ENCODE measurements at regions of chr11 and their contacts with region 1.

Region 1: DNA sequence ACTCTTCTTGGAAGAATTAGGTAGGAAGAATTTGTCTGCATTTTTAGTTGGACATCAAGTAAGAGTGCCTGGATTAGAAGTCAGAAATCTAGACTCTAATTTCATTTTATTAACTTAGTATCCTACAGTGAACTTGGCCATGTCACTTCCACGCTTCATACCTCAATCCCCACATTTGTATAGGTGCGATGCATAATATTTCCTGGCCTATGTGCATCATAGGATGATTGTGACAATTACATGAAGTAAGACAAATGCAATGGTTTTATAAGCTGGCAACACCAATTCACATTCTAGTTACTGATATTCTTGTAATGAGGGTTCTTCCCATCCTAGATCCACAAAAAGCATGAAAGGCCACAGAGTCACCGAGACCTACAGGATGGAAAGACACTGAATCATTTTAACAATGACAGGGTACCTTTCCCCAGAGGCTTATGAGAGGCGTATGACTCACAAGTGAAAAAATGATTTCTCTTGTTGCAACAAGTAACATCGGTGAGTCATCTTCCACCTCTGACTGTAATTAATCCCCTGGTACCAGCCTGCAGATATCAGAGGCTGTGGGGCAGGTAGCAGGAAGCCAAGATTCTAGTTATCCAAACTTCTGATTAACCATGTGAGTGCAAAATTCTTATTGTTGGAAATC is 56.0 kb upstream of the OR5AK2 start:
- DNase-seq: peak; percentile 54 to 97
- H3K4me3 ChIP-seq: no peak overlapping the region
- H3K27ac ChIP-seq: peak overlapping the region; percentile 84
- H3K4me1 ChIP-seq: peaks cover 20% of the 10 kb centered on the region
- H3K27me3 ChIP-seq: no peaks in the 10 kb centered on the region
- CTCF ChIP-seq: no peak

Region 2: GRCh38 chr11:56906683-56907148 is 26.0 kb before region 1 on chr11:
- CTCF ChIA-PET with region 1: no interaction called
- POLR2A ChIA-PET with region 1: no interaction called
- intact Hi-C with region 1: loop called (anchors 2 kb)
- DNase-seq: peak; percentile 54 to 87
- H3K4me3 ChIP-seq: peak overlapping the region; percentile 15; the same call in 1 of the 2 replicates
- H3K27ac ChIP-seq: peak overlapping the region; percentile 98
- H3K4me1 ChIP-seq: peaks cover 37% of the 10 kb centered on the region
- H3K27me3 ChIP-seq: no peaks in the 10 kb centered on the region
- CTCF ChIP-seq: no peak

Region 3: DNA sequence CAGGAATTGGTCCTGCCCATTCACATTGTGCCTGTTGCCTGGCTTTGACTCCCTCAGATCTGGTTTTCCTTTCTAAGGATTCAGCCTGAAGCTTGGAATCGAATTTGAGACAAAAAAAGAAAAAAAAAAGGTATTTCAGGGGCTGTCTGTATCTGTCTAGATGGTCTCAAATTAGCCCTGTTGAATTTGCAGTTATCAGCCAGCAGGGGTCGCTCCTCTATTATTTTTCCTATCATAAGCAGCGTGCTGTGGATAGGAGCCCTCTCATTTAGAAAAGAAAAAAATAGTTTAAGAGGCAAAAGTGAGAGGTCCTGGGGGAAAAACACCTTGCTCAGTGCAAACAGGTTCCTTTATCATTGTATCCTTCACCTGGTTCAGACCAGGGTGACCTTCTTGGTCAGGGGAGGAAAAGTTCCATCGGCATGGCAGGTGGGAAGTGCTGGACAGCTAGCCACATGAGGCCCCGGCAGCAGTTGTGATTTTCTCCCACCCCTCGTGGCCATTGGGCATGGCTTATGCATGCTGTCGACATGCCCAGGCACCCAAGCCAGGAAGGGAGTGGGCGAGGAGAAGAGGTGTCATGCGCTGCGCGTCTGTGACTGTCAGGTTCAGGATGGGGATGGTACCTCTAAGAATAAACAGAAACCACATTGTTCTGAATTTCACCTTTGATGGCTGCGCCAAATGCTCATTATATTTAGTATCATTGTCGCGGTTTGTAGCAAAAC is 69.1 kb after region 1 on chr11:
- CTCF ChIA-PET with region 1: no interaction called
- POLR2A ChIA-PET with region 1: no interaction called
- intact Hi-C with region 1: no loop called
- DNase-seq: no peak
- H3K4me3 ChIP-seq: no peak overlapping the region
- H3K27ac ChIP-seq: no peak overlapping the region
- H3K4me1 ChIP-seq: no peaks in the 10 kb centered on the region
- H3K27me3 ChIP-seq: no peaks in the 10 kb centered on the region
- CTCF ChIP-seq: peak; percentile 67